ENCODE measurements at regions of chr2 and their contacts with region 1.

Region 1: DNA sequence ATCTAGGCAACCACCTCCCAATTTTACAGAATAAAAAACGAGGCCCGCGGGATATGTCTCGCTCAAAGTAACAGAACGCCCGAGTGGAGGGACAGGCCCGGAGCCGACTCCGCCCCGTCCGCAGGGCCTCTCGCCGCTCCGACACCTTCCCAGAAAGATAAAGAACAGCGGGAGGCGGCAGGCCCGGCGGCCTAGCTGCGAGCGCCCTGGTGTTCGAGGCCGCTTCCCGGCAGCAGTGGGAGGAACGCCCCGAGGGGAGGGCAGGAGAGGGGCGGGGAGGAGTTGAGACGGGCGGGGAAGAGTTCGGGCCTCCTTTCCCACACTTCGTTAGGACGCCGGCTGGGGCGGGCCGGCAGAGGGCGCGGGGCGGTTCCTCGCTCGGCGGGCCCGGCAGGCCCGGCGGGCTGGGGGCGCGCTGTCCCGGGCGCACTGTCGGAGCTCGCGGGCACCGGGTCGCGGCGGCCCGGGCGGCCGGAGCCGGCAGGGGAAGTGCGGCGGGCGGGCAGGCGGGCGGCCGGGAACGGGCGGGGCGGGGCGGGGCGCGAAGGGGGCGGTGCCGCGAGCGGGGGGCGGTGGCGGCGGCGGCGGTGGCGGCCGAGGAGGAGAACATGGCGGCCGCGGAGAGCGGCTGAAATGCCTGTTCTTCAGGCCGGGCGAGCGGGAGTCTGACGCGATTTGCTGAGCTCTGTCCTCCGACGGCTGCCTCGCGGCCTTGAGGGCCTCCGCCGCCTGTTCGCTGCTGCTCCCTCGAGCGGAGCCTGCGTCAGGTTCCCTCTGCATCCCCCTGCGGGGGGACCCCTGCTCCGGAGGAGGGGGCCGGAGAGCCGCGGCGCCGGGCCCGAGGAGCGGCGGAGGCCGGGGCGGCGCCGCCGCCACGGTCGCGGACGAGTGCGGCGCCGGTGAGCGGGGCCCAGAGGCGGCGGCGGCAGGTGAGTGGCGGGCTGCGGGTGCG is at the start of gene NCOA1:
- DNase-seq: peak; percentile 96
- H3K4me3 ChIP-seq: peak within 1 kb of the TSS; percentile 84
- H3K27ac ChIP-seq: peak within 1 kb of the TSS; percentile 87
- H3K4me1 ChIP-seq: peaks cover 46% of the 10 kb centered on the region
- H3K27me3 ChIP-seq: no peaks in the 10 kb centered on the region
- CTCF ChIP-seq: no peak
- total RNA-seq, gene NCOA1: 27.5 TPM in 2 replicates

Region 2: DNA sequence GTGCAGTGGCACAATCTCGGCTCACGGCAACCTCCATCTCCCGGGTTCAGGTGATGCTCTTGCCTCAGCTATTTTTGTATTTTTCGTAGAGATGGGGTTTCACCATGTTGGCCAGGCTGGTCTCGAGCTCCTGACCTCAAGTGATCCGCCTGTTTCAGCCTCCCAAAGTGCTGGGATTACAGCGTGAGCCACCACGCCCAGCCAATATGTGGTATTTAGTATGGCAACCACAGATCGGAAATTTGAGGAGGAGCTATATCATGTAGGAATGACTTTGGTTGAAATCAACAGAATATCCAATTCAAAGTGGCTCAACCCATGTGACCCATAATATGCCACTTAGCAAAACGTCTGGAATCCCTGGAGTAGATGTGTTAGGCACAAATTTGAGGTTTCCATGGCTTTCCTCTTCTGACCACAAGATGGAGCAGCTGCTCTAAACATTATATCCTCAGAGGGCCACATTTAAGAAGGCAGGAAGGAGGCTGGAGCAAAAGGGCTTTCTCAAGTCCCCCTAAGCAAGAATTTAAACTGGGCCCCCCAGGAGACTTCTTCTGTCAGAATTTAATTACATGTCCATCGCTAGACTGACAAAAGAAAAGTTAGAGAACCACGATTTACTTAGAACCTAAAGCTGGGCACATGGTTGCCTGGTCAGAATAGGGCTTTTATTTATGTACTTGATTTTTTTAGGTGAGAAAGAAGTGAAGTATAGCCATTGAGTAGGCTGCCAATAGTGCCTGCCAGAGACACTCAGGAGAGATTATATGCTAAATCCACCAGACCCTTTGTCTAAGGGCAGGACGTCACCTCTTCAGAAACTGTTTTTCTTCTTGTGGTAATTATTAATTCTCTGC is 81.0 kb before region 1 on chr2:
- CTCF ChIA-PET with region 1: interaction called, 6 read pairs
- POLR2A ChIA-PET with region 1: no interaction called
- intact Hi-C with region 1: loop called (anchors 5 kb)
- DNase-seq: peak; percentile 83
- H3K4me3 ChIP-seq: no peak overlapping the region
- H3K27ac ChIP-seq: no peak overlapping the region
- H3K4me1 ChIP-seq: peaks cover 3% of the 10 kb centered on the region
- H3K27me3 ChIP-seq: no peaks in the 10 kb centered on the region
- CTCF ChIP-seq: peak; percentile 87

Region 3: DNA sequence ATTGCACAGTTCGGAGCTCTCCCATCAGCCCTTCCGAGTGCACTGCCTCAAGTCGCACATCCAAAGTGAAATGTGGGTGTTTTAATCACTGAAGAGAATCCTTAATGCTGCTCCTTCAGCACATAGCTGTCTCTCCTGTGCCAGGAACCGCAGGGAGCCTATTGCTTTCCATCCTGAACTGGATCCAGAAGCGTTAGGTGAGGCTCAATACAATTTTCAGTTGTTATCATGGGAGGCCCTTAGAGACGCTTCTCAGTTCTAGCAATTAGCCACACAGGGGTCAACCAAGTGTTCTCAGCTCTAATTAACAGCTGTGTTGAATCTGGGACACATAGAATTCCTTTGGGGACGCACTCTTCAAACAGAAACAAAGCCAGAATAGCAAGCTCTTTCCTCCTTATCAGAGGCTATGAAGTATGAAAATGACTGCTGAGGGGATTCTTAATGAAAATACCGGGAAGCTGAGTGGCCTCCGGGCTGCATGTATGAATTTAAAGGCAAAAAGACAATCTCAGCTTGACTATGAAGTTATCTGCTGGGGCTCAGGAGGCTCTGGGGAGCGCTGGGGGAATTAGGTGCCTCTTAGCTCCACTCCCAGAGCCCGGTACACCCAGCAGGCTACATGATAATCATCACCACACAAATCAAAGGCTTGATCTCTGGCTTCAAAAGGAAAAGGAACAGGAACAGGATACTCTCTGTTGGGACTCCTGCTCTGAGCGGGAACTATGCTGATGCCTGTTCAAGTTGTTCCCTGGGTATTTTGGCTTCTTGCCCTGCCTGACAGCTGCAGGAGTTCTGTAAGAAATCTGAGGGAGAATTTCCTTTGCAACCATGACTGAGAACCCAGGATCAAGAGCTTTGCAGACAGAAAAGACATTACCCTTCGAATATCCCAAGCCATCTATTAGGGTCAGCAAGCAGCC is 55.3 kb before region 1 on chr2:
- CTCF ChIA-PET with region 1: no interaction called
- POLR2A ChIA-PET with region 1: no interaction called
- intact Hi-C with region 1: loop called (anchors 5 kb)
- DNase-seq: peak; percentile 93
- H3K4me3 ChIP-seq: peak overlapping the region; percentile 16
- H3K27ac ChIP-seq: peak overlapping the region; percentile 76
- H3K4me1 ChIP-seq: peaks cover 24% of the 10 kb centered on the region
- H3K27me3 ChIP-seq: no peaks in the 10 kb centered on the region
- CTCF ChIP-seq: no peak

Region 4: GRCh38 chr2:24477229-24477628 is 13.7 kb before region 1 on chr2:
- CTCF ChIA-PET with region 1: no interaction called
- POLR2A ChIA-PET with region 1: no interaction called
- intact Hi-C with region 1: no loop called
- DNase-seq: no peak
- H3K4me3 ChIP-seq: no peak overlapping the region
- H3K27ac ChIP-seq: no peak overlapping the region
- H3K4me1 ChIP-seq: no peaks in the 10 kb centered on the region
- H3K27me3 ChIP-seq: no peaks in the 10 kb centered on the region
- CTCF ChIP-seq: no peak

Measured in A673 (cell line).